WTC11 (cell line): ENCODE measurements at regions of chr22 and their contacts with region 1.

Region 1: DNA sequence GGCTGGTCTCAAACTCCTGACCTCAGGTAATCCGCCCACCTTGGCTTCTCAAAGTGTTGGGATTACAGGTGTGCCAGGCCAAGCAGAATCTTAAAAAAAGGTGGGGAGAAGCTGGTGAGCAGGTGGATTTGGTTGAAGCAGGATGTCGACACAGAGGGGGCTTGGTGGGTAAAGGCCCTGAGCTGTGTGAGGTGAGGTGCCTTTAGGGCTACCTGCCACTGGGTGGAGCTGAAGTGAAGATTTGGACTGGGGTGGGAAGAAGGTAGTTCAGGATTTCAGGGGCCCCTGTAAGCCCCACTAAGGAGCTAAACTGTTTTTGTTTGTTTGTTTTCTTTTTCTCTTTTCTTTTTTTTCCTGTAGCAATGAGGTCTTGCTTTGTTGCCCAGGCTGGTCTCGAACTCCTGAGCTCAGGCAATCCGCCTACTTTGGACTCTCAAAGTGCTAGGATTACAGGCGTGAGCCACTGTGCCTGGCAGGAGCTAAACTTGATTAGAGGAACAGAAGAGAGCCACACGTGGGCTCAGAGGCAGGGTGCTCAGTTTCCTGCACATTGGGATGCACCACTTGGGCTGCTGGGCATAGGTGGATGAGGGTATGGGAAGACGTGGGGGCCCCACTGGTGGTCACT is 6.0 kb downstream of the P2RX6 start:
- DNase-seq: peak; percentile 68
- ATAC-seq: peak; percentile 95
- H3K4me3 Mint-ChIP-seq: no peak overlapping the region
- H3K27ac Mint-ChIP-seq: no peak overlapping the region
- H3K4me1 Mint-ChIP-seq: no peaks in the 10 kb centered on the region
- H3K27me3 Mint-ChIP-seq: peaks cover 14% of the 10 kb centered on the region
- CTCF ChIP-seq: peak; percentile 52; the same call in 1 of the 2 replicates

Region 2: DNA sequence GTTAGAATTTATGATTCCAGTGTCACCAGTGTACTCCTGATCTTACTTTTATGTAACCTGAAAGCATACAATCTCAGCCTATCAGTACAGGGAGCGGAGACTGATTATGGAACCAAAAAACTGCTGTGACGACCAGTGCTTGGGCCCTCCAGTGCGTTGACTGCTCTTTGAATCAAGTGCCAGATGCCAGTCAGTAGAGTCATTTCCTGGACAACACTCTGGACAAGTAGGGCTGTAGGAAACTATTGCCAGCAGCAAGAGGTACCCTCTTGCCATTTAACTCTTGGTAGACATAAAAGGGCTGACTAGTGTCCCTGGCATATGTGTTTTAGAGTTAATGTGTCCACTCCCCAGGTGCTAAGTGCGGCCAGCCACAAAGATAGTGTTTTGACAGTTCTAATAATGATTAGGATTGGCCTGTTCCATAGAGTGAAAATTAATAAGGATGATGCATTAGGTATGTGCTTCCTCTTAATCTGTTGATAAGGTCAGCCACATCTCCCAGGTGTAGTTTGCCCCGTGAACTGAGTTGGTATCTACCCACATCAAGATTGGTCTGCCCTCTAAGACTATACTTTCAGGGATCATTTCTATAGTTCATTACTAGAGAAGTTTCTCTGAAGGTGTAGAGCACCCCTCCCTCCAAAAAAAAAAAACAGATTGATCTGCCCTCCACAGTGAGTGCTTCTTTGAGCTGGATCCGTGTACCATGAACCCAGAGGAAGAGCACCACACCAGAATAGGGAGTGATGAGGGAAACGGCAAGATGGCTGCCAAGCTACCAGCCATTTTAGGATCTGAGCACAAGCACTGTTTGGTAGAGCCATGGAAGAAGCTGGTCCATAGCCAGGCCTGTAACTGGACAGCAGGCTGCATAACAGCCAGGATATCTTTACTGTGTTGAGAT is 74.6 kb before region 1 on chr22:
- CTCF ChIA-PET with region 1: no interaction called
- POLR2A ChIA-PET with region 1: no interaction called
- DNase-seq: no peak
- ATAC-seq: no peak
- H3K4me3 Mint-ChIP-seq: no peak overlapping the region
- H3K27ac Mint-ChIP-seq: 0 out of 2 replicates have a peak overlapping the region, but pooled peaks have one; percentile 64
- H3K4me1 Mint-ChIP-seq: peaks cover 31% of the 10 kb centered on the region
- H3K27me3 Mint-ChIP-seq: no peaks in the 10 kb centered on the region
- CTCF ChIP-seq: no peak

Region 3: DNA sequence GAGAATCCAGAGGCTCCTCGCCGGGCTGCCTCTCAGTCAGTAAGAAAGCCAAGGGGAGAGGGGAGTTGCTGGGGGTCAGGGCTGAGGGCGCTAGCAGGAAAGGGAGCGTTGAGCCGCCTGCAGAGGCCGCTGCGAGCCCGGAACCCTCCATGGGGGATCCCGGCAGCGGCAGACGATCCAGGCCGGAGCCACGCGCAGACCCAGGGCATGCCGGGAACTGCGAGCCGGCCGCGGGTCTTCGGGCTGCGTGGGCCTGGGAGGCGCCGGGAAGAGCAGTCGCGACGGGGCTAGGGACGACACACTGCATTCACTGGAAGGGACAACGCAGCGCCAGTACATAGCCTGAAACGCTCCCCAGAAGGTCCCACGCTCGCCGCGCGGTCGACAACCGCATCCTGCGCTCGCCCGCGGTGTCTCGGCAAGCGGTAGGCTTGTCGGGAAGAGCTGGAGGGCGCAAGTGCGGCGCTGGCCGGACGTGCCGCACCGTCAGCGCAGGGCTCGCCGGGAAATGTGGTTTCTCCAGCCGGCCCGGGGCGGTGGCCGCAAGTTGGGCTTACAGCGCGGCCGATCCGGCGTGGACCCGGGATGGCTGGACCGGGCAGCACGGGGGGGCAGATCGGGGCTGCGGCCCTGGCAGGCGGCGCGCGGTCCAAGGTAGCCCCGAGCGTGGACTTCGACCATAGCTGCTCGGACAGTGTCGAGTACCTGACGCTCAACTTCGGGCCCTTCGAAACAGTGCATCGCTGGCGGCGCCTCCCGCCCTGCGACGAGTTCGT is 38.9 kb before region 1 on chr22 and contains the start of gene LZTR1:
- CTCF ChIA-PET with region 1: interaction called, 16 read pairs
- POLR2A ChIA-PET with region 1: interaction called, 3 read pairs
- DNase-seq: peak; percentile 81
- ATAC-seq: peak; percentile 69
- H3K4me3 Mint-ChIP-seq: peak within 1 kb of the TSS; percentile 96
- H3K27ac Mint-ChIP-seq: peak within 1 kb of the TSS; percentile 85
- H3K4me1 Mint-ChIP-seq: peaks cover 30% of the 10 kb centered on the region
- H3K27me3 Mint-ChIP-seq: peaks cover 32% of the 10 kb centered on the region
- CTCF ChIP-seq: no peak
- total RNA-seq, gene LZTR1: 38.3 to 44.5 TPM (median 40.1 TPM) in 3 replicates

Region 4: DNA sequence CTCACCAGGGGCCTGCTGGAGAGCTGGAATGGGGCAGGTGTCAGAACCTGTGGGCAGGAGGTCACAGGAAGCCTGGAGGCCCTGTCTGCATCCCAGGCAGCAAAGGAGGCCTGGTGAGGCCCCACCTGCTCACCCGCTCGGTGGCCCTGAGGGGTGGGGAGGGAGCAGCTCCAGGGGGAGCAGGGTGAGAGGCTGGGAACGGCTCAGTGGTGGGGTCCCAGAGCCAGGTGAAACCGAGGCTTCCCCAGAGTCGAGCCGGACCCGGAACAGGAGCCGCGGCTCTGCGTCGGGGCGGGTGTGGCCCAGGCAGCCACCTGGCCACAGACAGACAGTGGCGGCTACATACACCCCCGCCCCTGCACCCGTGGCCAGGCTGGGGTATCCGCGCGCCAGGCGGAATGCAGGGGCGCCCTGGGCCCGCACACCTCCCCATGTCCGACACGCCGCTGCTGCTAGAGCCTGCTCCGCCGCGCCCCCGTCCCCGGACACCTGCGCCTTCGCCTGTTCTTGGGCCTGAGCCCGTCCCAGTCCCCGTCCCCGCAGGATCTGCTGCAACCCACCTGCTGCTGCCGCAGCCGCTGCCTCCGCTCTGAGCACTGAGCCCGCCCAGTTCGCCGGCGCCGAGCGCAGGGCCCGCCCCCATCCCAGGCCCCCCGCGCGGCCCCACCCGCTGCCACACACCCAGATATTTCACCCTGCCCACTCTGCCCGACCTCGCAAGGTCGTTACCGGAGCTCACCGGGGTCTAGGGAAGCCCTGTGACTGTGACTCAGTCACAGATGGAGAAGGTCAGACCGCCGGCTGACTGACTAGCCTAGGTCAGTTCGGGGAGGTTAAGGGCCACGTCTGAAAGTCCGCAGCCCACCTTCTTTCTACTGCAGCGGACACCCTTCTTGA is 11.3 kb after region 1 on chr22 and contains the start of gene SLC7A4:
- CTCF ChIA-PET with region 1: interaction called, 16 read pairs
- POLR2A ChIA-PET with region 1: no interaction called
- DNase-seq: peak; percentile 63
- ATAC-seq: peak; percentile 75
- H3K4me3 Mint-ChIP-seq: peak within 1 kb of the TSS; percentile 68
- H3K27ac Mint-ChIP-seq: no peak within 1 kb of the TSS
- H3K4me1 Mint-ChIP-seq: peaks cover 6% of the 10 kb centered on the region
- H3K27me3 Mint-ChIP-seq: peaks cover 33% of the 10 kb centered on the region
- CTCF ChIP-seq: no peak
- total RNA-seq, gene SLC7A4: 0.21 to 0.50 TPM (median 0.37 TPM) in 3 replicates

Region 5: DNA sequence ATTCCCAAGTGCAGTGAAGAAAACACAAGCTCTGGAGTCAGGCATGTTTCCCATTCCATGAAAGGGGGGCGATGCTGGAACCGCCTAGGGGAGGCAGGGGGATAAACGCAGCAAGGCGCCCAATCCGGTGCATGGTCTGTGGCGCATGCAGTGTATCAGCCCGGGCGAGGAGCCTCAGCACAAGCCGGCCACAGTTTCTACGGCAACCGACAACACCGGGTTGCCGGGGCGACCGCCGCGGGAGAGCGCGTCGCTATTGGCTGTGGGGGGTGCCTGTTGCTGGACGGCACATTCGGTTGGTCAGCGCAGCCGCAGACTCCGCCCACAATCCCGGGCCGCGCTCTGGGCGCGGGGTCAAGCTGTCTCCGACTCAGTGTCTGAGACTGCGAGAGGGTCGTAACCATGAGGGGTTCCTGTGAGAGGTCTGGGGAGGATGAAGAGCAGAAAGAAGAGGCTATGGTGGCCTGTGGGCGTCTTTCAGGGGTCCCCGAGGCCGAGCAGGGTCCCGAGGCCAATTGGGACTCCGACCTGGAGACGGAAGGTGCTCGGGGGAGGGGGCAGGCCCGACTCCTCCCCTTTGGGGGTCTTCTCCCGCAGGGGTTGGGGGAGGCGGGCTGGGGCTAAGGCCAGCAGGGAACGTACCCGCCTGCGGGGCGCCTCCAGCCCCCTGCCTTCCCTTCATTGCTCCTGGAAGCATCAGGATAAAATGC is 24.8 kb after region 1 on chr22 and contains the start of gene LRRC74B:
- CTCF ChIA-PET with region 1: interaction called, 12 read pairs
- POLR2A ChIA-PET with region 1: interaction called, 10 read pairs
- DNase-seq: peak; percentile 97
- ATAC-seq: peak; percentile 96
- H3K4me3 Mint-ChIP-seq: peak within 1 kb of the TSS; percentile 89
- H3K27ac Mint-ChIP-seq: no peak within 1 kb of the TSS
- H3K4me1 Mint-ChIP-seq: peaks cover 11% of the 10 kb centered on the region
- H3K27me3 Mint-ChIP-seq: peaks cover 23% of the 10 kb centered on the region
- CTCF ChIP-seq: no peak
- total RNA-seq, gene LRRC74B: not detected in 3 replicates

Region 6: GRCh38 chr22:21065230-21065854 is 44.4 kb after region 1 on chr22:
- CTCF ChIA-PET with region 1: interaction called, 14 read pairs
- POLR2A ChIA-PET with region 1: no interaction called
- DNase-seq: no peak
- ATAC-seq: no peak
- H3K4me3 Mint-ChIP-seq: no peak overlapping the region
- H3K27ac Mint-ChIP-seq: no peak overlapping the region
- H3K4me1 Mint-ChIP-seq: no peaks in the 10 kb centered on the region
- H3K27me3 Mint-ChIP-seq: no peaks in the 10 kb centered on the region
- CTCF ChIP-seq: no peak